Right lobe of liver (tissue), 6 donors: ENCODE measurements at regions of chr21 and their contacts with region 1.

Region 1: DNA sequence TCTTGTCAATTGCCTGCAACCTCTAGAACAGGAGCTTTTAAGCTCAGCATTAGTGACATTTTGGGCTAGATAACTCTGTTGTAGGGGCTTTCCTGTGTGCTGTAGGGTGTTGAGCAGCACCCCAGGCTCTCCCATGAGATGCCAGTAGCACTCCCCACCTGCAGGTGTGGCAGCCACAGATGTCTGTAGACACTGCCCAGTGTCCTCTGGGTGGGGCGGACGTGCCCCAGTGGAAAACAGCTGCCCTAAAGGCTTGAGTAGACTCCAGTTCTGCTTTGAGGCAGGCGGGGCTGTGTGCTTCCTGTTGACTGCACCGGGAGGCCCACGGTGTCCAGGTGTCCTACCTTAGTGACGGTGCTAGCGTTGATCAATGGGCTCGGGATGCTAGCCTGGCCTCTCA is 16.9 kb upstream of the PWP2 start:
- DNase-seq: no peak
- ATAC-seq: no peak
- H3K4me3 ChIP-seq: no peak overlapping the region
- H3K27ac ChIP-seq: no peak overlapping the region
- H3K4me1 ChIP-seq: peaks cover 0 to 5% (median 0%) of the 10 kb centered on the region in 4 donors
- H3K27me3 ChIP-seq: no peaks in the 10 kb centered on the region
- CTCF ChIP-seq: no peak
- POLR2A ChIP-seq: no peak

Region 2: GRCh38 chr21:43984905-43985689 is 105.2 kb before region 1 on chr21:
- intact Hi-C with region 1: loop called in 1 of 2 experiments (anchors 10 kb)
- DNase-seq: no peak
- ATAC-seq: peak in 3 of 4 donors; percentile 7 to 28 (median 18)
- H3K4me3 ChIP-seq: no peak overlapping the region
- H3K27ac ChIP-seq: no peak overlapping the region
- H3K4me1 ChIP-seq: no peaks in the 10 kb centered on the region
- H3K27me3 ChIP-seq: no peaks in the 10 kb centered on the region
- CTCF ChIP-seq: no peak
- POLR2A ChIP-seq: no peak